ENCODE measurements at regions of chr21 and their contacts with region 1.

Region 1: GRCh38 chr21:45554477-45555175 is 12.4 kb upstream of the SLC19A1 start:
- DNase-seq: peak in 1 of 2 donors; percentile 66
- ATAC-seq: peak; percentile 51 to 69
- H3K4me3 ChIP-seq: peak overlapping the region; percentile 43 to 82 (median 55)
- H3K27ac ChIP-seq: peak overlapping the region in 1 of 4 donors; percentile 43
- H3K4me1 ChIP-seq: peaks cover 3% of the 10 kb centered on the region in 2 donors
- H3K27me3 ChIP-seq: peaks cover 0 to 6% (median 6%) of the 10 kb centered on the region in 3 donors
- CTCF ChIP-seq: peak; percentile 67 to 85 (median 74)
- POLR2A ChIP-seq: peak in 1 of 2 donors; percentile 16

Region 2: DNA sequence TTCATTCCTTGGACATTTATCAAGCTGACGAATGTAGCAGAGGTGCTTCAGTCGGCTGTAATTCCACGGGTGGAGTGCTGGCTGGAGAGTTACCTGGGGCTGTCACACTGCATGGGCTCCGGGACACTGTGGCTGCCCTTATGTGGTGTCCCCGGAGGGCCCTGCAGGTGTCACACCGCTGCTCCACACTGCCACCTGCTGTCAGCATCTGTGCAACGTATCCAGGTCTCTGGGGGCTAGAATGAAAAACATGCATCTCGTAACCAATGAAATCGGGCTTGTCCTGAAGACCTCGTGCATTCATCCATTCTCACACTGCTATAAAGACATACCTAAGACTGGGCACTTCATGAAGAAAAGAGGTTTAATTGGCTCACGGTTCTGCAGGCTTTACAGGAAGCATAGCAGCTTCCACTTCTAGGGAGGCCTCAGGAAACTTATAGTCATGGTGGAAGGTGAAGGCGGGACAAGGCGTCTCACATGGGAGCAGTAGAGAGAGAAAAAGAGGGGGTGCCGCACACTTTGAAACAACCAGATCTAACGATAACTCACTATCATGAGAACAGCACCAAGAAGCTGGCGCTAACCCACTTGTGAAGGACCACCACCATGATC is 42.2 kb after region 1 on chr21:
- in situ Hi-C with region 1: no loop called
- intact Hi-C with region 1: loop called (anchors 1 kb)
- DNase-seq: peak; percentile 15 to 20
- ATAC-seq: no peak
- H3K4me3 ChIP-seq: no peak overlapping the region
- H3K27ac ChIP-seq: no peak overlapping the region
- H3K4me1 ChIP-seq: no peaks in the 10 kb centered on the region
- H3K27me3 ChIP-seq: peaks cover 7 to 23% (median 13%) of the 10 kb centered on the region in 3 donors
- CTCF ChIP-seq: peak; percentile 37 to 68 (median 52)
- POLR2A ChIP-seq: no peak

Region 3: GRCh38 chr21:45820171-45821091 is 265.8 kb after region 1 on chr21:
- in situ Hi-C with region 1: loop called (anchors 10 to 25 kb)
- intact Hi-C with region 1: loop called (anchors 1 kb)
- DNase-seq: peak; percentile 32 to 38
- ATAC-seq: peak; percentile 58 to 69
- H3K4me3 ChIP-seq: no peak overlapping the region
- H3K27ac ChIP-seq: no peak overlapping the region
- H3K4me1 ChIP-seq: no peaks in the 10 kb centered on the region
- H3K27me3 ChIP-seq: peaks cover 0 to 4% (median 3%) of the 10 kb centered on the region in 3 donors
- CTCF ChIP-seq: peak; percentile 43 to 81 (median 73)
- POLR2A ChIP-seq: no peak

Region 4: GRCh38 chr21:45923146-45923545 is 368.5 kb after region 1 on chr21:
- in situ Hi-C with region 1: no loop called
- intact Hi-C with region 1: loop called (anchors 5 kb)
- DNase-seq: peak in 1 of 2 donors; percentile 40
- ATAC-seq: no peak
- H3K4me3 ChIP-seq: no peak overlapping the region
- H3K27ac ChIP-seq: no peak overlapping the region
- H3K4me1 ChIP-seq: no peaks in the 10 kb centered on the region
- H3K27me3 ChIP-seq: peaks cover 0 to 8% (median 7%) of the 10 kb centered on the region in 3 donors
- CTCF ChIP-seq: peak; percentile 35 to 64 (median 50)
- POLR2A ChIP-seq: no peak